Body of pancreas (tissue), 4 donors: ENCODE measurements at regions of chr6 and their contacts with region 1.

Region 1: DNA sequence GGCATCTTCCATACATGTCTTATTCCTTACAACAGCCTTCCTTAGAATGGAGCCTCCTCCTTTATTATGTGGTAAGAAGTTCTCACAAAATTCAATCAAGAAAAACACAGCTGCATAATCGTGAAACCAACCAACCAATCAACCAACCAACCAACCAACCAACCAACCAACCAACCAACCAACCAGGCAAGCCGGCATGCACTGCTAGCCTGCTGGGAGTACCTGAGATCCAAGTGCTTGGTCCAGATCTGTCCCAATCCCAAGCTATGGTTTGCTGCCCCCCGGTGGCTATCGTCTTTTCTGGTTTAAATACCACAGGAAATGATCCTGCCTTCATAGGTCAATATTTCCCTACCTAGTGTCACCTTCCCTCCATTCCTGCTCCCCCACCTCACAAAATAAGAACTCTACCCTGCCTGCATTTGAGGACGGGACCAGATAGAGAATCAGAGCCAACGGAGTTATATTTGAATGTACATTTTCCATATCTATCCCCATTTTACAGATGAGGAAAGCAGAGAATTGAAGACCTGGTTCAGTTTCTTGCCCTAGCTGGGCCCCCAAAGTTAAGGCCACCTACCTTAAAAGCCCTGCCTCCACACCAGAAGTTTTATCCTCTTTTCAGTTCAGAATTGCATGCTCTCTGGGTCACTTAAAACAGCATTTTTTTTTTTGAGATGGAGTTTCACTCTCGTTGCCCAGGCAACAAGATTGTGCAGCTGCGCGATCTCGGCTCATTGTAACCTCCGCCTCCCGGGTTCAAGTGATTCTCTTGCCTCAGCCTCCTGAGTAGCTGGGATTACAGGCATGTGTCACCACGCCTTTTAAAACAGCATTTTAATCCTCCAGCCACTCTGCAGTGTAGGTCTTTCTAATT is 27.1 kb downstream of the RAB44 start:
- DNase-seq: peak; percentile 87 to 92 (median 90)
- ATAC-seq: peak; percentile 89
- H3K4me3 ChIP-seq: no peak overlapping the region
- H3K27ac ChIP-seq: no peak overlapping the region
- H3K4me1 ChIP-seq: no peaks in the 10 kb centered on the region
- H3K27me3 ChIP-seq: no peaks in the 10 kb centered on the region
- CTCF ChIP-seq: peak; percentile 55 to 92 (median 88)
- POLR2A ChIP-seq: no peak

Region 2: DNA sequence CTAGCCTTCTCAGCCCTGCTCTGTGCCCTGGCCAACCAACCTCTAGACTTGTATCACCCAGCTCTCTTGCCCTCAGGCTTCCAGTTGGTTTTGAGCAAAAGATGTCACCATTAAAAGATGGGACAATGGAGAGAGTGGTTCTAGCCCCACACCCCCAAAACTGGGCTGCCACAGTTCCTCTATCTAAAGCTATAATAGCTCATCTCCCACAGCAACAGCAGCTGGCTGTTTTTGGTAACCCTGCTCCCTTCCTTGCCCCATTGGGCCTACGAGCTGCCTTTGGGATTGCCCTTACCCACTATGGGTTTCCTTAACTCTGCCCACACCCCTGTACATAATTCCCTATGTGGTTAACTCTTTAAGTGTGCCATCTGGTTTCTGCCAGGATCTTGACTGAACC is 138.1 kb before region 1 on chr6:
- intact Hi-C with region 1: no loop called
- DNase-seq: no peak
- ATAC-seq: no peak
- H3K4me3 ChIP-seq: no peak overlapping the region
- H3K27ac ChIP-seq: no peak overlapping the region
- H3K4me1 ChIP-seq: no peaks in the 10 kb centered on the region
- H3K27me3 ChIP-seq: no peaks in the 10 kb centered on the region
- CTCF ChIP-seq: no peak
- POLR2A ChIP-seq: no peak

Region 3: GRCh38 chr6:36623547-36624459 is 100.9 kb before region 1 on chr6:
- intact Hi-C with region 1: loop called (anchors 5 kb)
- DNase-seq: peak; percentile 90 to 93 (median 91)
- ATAC-seq: peak; percentile 81
- H3K4me3 ChIP-seq: no peak overlapping the region
- H3K27ac ChIP-seq: no peak overlapping the region
- H3K4me1 ChIP-seq: peaks cover 38% of the 10 kb centered on the region
- H3K27me3 ChIP-seq: no peaks in the 10 kb centered on the region
- CTCF ChIP-seq: peak; percentile 56 to 94 (median 93)
- POLR2A ChIP-seq: peak in 1 of 3 donors; percentile 22

Region 4: DNA sequence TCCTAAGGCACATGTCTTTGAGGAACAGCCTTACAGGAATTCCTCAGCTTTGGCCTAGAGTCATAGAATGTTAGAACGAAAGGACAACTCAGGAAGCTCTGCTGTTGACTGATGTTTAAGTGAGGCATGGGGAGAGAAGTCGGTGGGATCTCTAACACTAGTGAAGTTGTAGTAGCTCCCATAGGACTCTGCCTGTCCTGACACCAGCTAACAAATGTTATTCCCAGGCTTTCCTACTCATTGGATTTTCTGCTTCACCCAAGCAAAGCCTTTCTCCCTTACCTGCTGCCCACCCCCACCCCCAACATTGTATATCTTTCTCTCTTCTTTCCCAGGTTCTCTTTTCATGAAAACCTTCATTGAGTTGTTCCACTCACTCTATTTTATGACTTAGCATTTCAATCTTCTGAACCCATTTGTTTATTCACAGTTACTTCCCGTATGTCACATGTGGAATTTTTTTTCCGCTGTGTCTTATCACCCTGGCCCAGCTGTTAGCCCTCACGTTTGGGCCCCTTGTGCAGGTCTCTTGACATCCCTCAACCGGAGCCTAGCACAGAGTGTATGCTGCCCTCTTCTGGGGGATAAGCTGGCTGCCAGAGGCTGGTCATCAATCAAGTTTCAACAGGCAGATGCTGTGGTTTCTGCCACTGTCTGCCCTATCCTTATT is 589.9 kb after region 1 on chr6:
- intact Hi-C with region 1: no loop called
- DNase-seq: peak; percentile 38 to 71 (median 60)
- ATAC-seq: peak; percentile 60
- H3K4me3 ChIP-seq: no peak overlapping the region
- H3K27ac ChIP-seq: no peak overlapping the region
- H3K4me1 ChIP-seq: no peaks in the 10 kb centered on the region
- H3K27me3 ChIP-seq: no peaks in the 10 kb centered on the region
- CTCF ChIP-seq: peak in 6 of 7 experiments; percentile 12 to 53 (median 42)
- POLR2A ChIP-seq: no peak